ENCODE measurements at regions of chr12 and their contacts with region 1.

Region 1: GRCh38 chr12:19474147-19474546 is 34.9 kb downstream of the AEBP2 start:
- DNase-seq: no peak
- H3K4me3 ChIP-seq: no peak overlapping the region
- H3K27ac ChIP-seq: no peak overlapping the region
- H3K4me1 ChIP-seq: no peaks in the 10 kb centered on the region
- H3K27me3 ChIP-seq: no peaks in the 10 kb centered on the region
- CTCF ChIP-seq: no peak

Region 2: DNA sequence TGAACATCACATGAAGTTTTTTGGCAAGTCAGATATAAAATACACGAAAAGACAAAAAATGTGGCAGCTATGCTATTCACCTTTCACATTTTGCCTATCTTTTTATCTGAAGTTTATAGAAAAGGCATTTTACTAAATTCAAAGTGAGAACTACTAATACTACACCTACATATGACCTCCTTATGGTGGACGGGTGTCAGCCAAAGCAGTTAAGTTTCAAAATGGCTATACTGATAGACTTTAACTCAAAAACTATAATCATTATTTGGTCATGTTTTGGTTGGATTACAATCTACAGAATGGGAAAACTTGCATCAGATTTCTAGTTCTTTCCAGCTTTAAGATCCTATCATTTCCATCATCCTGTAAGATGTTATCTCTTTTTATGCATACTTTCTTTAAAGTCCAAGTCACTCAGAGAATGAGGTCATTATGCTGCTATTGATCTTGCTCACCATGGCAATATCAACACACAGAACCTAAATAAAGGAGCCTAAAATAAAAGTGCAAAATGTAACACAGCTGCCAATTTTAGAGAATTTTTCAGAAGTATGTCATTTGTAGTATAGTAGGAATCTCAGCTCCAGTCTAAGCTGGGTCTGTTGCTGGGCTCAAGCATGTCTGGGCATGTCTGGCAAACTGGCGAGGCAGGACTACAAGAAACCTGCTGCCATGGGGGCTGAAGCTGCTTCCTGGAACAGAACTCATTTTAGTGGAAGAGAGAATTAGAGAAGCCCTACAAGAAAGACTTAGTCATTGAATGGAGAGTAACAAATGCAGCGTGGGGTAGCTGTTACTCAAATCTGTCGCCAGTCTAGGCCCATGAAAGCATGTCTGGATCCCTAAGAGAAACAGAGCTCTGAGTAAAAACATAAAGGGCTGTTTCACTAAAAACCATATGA is 42.5 kb before region 1 on chr12:
- CTCF ChIA-PET with region 1: interaction called, 12 read pairs
- dilution Hi-C with region 1: no loop called
- in situ Hi-C with region 1: no loop called
- intact Hi-C with region 1: no loop called
- DNase-seq: peak; percentile 90
- H3K4me3 ChIP-seq: no peak overlapping the region
- H3K27ac ChIP-seq: peak overlapping the region; percentile 88
- H3K4me1 ChIP-seq: peaks cover 19% of the 10 kb centered on the region
- H3K27me3 ChIP-seq: no peaks in the 10 kb centered on the region
- CTCF ChIP-seq: no peak